Activated CD8-positive, alpha-beta T cell treated with anti-CD3 and anti-CD28 coated beads for 36 hours (primary cell): ENCODE measurements at regions of chr1 and their contacts with region 1.

Region 1: GRCh38 chr1:111719674-111720132 is 19.5 kb downstream of the INKA2 start:
- DNase-seq: no peak
- ATAC-seq: no peak
- H3K4me3 Mint-ChIP-seq: no peak overlapping the region
- H3K27ac Mint-ChIP-seq: no peak overlapping the region
- H3K4me1 Mint-ChIP-seq: peaks cover 20% of the 10 kb centered on the region
- H3K27me3 Mint-ChIP-seq: no peaks in the 10 kb centered on the region
- CTCF ChIP-seq: no peak

Region 2: GRCh38 chr1:111704776-111705175 is 14.9 kb before region 1 on chr1:
- CTCF ChIA-PET with region 1: interaction called, 62 read pairs
- POLR2A ChIA-PET with region 1: interaction called, 4 read pairs
- intact Hi-C with region 1: no loop called
- DNase-seq: no peak
- ATAC-seq: peak; percentile 53
- H3K4me3 Mint-ChIP-seq: no peak overlapping the region
- H3K27ac Mint-ChIP-seq: no peak overlapping the region
- H3K4me1 Mint-ChIP-seq: peaks cover 75% of the 10 kb centered on the region
- H3K27me3 Mint-ChIP-seq: no peaks in the 10 kb centered on the region
- CTCF ChIP-seq: no peak

Region 3: GRCh38 chr1:111739194-111739924 is 19.7 kb after region 1 on chr1 and contains the start of gene INKA2:
- CTCF ChIA-PET with region 1: interaction called, 47 read pairs
- POLR2A ChIA-PET with region 1: interaction called, 8 read pairs
- intact Hi-C with region 1: no loop called
- DNase-seq: peak; percentile 84
- ATAC-seq: peak; percentile 82
- H3K4me3 Mint-ChIP-seq: peak within 1 kb of the TSS; percentile 82
- H3K27ac Mint-ChIP-seq: peak within 1 kb of the TSS; percentile 75
- H3K4me1 Mint-ChIP-seq: peaks cover 13% of the 10 kb centered on the region
- H3K27me3 Mint-ChIP-seq: peaks cover 33% of the 10 kb centered on the region
- CTCF ChIP-seq: no peak
- total RNA-seq, gene INKA2: 1.7 to 2.3 TPM

Region 4: DNA sequence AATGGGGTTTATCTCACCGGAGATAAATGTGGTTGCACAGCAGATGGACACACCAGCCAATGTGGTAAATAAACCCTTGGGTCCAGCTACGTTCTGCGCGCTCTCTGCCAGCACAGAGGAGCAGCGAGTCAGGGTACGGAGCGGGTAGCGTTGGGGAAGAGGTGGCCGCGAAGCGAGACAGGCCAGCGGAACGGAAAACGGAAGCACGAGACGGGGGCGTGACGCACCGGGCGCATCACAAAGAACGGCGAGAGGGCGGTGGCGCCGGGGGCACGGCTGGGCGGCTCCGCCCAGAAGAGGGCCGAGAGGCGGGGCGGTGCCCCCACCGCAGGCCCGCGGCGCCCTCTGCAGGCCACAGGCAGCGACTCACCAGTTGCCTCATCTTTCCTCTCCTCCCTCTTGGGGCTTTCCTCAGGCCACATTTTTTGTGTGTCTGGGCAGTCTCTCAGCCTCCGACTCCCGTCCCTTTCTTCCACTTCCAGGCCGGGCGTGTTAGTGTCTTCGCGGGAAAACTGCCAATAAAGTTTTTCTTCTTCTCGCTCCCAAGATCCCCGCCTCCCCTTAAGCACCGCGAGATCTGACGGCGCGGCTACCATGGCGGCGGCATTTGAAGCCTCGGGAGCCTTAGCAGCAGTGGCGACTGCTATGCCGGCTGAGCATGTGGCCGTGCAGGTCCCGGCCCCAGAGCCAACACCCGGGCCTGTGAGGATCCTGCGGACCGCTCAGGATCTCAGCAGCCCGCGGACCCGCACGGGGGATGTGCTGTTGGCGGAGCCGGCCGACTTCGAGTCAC is 35.8 kb after region 1 on chr1 and contains the start of gene DDX20:
- CTCF ChIA-PET with region 1: interaction called, 76 read pairs
- POLR2A ChIA-PET with region 1: interaction called, 5 read pairs
- intact Hi-C with region 1: loop called (anchors 5 kb)
- DNase-seq: peak; percentile 96
- ATAC-seq: peak; percentile 93
- H3K4me3 Mint-ChIP-seq: peak within 1 kb of the TSS; percentile 88
- H3K27ac Mint-ChIP-seq: peak within 1 kb of the TSS; percentile 98
- H3K4me1 Mint-ChIP-seq: peaks cover 33% of the 10 kb centered on the region
- H3K27me3 Mint-ChIP-seq: no peaks in the 10 kb centered on the region
- CTCF ChIP-seq: peak; percentile 84
- total RNA-seq, gene DDX20: 15.3 to 15.9 TPM